ENCODE measurements at regions of chr3 and their contacts with region 1.

Region 1: DNA sequence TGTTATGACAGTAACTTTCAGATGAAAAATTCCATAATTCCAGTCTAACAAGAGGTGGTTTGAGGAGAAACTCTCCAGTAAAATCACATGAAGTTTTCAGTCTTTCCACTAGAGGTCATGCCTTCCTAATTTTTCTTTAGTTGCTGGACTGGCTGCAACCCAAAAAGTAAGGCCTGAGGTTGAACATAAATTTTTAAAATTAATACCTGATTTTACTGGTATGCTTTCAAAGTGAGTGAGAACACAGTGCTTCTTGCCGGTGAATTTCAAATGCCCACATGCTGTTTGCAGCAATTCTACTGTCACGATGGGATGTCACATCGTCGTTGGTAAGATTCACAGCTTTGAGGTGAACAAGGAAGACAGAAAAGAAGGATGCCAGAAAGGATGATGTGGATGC is 89.0 kb upstream of the FGF12 start:
- DNase-seq: no peak
- H3K4me3 ChIP-seq: no peak overlapping the region
- H3K27ac ChIP-seq: no peak overlapping the region
- H3K4me1 ChIP-seq: peaks cover 7 to 29% (median 18%) of the 10 kb centered on the region in 4 donors
- H3K27me3 ChIP-seq: no peaks in the 10 kb centered on the region
- CTCF ChIP-seq: peak; percentile 71 to 74 (median 73)
- EP300 ChIP-seq: no peak
- POLR2A ChIP-seq: no peak

Region 2: DNA sequence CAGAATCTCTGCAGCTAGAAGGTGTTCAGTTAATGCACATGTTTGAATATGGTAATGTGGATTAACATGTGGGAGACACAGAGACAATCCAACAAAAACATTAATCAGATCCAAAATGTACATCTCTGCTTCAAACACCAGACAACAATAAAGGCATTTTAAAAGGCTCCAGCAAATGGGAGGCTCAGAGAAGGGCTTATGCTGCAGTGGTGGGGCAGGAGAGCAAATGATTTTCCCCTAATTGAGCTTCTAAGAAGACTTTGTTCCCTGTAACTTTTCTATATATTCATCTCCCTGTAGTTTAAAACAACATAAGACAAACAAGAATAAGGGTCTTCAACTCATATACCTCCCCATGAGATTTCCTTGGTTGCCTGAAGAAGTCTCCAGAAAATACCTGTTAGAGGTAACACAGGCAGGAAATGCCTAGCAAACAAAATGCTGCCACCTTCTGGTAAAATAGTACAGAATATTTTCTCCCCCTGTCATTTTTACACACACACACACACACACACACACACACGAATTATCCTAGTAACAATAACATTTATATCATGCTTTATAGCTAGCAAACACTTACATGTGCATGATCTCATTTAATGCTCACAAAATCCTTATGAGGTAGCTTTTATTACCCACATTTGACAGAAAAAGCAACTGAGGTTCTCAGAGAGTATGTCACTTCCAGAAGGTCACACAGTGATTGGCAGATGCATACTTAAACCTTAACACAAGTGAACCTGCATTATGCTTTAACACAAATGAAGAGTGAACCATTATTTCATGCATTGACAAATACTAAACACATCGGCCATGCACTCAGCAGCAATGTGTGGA is 224.7 kb after region 1 on chr3:
- intact Hi-C with region 1: loop called (anchors 1 kb)
- DNase-seq: peak; percentile 5
- H3K4me3 ChIP-seq: no peak overlapping the region
- H3K27ac ChIP-seq: no peak overlapping the region
- H3K4me1 ChIP-seq: no peaks in the 10 kb centered on the region
- H3K27me3 ChIP-seq: no peaks in the 10 kb centered on the region
- CTCF ChIP-seq: peak; percentile 53 to 56 (median 53)
- EP300 ChIP-seq: no peak
- POLR2A ChIP-seq: no peak

Region 3: DNA sequence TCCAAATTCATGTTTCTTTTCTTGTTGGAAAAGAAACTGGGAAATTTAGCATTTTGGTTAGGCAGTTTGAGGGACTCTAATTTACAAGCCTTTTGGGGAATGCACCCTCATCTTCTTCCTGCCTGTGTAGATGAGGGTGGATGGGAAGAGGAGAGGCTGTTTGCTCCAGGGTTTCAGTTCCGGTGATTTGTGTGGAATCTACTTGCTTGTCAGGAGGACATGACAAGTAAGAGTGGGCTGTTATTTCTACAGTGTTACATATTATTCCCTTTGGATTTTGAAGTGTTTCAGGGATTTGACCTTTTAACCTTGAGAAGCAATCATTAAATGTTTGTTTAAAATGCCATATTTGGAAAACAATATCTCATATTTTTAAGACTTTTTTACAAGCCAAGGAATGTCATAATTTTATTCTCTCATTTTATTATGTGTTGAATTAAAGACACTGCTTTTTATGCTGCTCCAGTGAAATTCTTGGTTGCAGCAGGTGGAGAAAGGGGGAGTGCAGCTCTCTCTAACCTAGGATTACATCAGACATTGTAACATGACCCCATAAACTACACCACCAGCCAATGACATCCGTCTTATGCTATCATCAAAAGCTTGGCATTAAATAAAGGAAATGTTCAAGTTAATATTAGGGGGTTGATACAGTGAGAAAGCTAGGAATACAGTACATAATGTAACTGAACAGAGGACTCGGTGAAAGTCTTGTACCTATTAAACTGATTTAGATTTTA is 454.9 kb after region 1 on chr3:
- intact Hi-C with region 1: no loop called
- DNase-seq: no peak
- H3K4me3 ChIP-seq: no peak overlapping the region
- H3K27ac ChIP-seq: no peak overlapping the region
- H3K4me1 ChIP-seq: no peaks in the 10 kb centered on the region
- H3K27me3 ChIP-seq: no peaks in the 10 kb centered on the region
- CTCF ChIP-seq: no peak
- EP300 ChIP-seq: no peak
- POLR2A ChIP-seq: no peak

Measured in esophagus muscularis mucosa (tissue), 4 donors.